Tibial artery (tissue), 4 donors: ENCODE measurements at regions of chr16 and their contacts with region 1.

Region 1: DNA sequence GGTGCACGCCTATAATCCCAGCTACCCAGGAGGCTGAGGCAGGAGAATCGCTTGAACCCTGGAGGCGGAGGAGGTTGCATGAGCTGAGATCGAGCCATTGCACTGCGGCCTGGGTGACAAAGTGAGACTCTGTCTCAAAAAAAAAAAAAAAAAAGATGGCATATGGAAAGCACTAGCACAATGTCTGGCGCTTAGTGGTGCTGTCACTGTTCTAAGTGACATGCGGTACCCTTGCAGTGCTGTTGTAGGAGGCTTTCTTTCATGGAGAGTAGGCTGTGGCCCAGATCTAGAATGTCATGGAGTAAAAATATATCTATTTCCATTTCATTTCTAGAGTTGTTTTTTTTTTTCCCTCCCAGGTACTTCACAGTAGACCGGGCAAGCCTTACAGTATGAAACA is 14.6 kb upstream of the METTL9 start:
- DNase-seq: no peak
- H3K4me3 ChIP-seq: no peak overlapping the region
- H3K27ac ChIP-seq: no peak overlapping the region
- H3K4me1 ChIP-seq: peaks cover 0 to 5% (median 0%) of the 10 kb centered on the region in 4 donors
- H3K27me3 ChIP-seq: no peaks in the 10 kb centered on the region
- CTCF ChIP-seq: no peak

Region 2: GRCh38 chr16:21645261-21645721 is 60.5 kb after region 1 on chr16:
- intact Hi-C with region 1: loop called (anchors 2 kb)
- DNase-seq: no peak
- H3K4me3 ChIP-seq: peak overlapping the region; percentile 11 to 12
- H3K27ac ChIP-seq: no peak overlapping the region
- H3K4me1 ChIP-seq: no peaks in the 10 kb centered on the region
- H3K27me3 ChIP-seq: no peaks in the 10 kb centered on the region
- CTCF ChIP-seq: no peak